GM12878 (cell line): ENCODE measurements at regions of chr2 and their contacts with region 1.

Region 1: DNA sequence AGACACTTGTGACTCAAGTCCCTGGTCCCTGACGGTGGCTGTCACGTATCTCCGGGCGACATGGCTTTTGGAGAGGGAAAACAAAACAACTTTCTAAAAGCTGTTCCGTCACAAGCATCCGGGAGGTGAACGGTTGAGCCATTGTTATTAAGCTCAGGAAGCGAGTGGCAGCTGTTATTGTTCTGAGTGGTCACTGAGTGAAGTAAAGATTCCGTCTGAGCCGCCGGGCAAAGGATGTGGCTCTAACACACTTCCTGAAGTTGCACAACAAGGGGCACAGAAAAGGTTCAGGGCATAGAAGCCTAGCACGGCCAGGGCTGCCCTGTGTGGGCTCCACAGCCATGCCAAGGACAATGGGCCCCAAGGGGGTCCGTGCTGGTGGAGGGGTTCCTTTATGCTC is 24.3 kb downstream of the INPP5D start:
- DNase-seq: peak; percentile 78
- ATAC-seq: peak; percentile 28
- H3K4me3 ChIP-seq: peak overlapping the region; percentile 47
- H3K27ac ChIP-seq: peak overlapping the region; percentile 100
- H3K4me1 ChIP-seq: peaks cover 91% of the 10 kb centered on the region
- H3K27me3 ChIP-seq: no peaks in the 10 kb centered on the region
- CTCF ChIP-seq: no peak
- EP300 ChIP-seq: peak; percentile 57 to 62; a peak in 2 of 4 replicates
- POLR2A ChIP-seq: peak; percentile 51; the same call in 1 of the 2 replicates
- RAD21 ChIP-seq: no peak

Region 2: GRCh38 chr2:233100192-233100998 is 15.9 kb after region 1 on chr2:
- CTCF ChIA-PET with region 1: interaction called, 19 read pairs
- POLR2A ChIA-PET with region 1: interaction called, 59 read pairs
- RAD21 ChIA-PET with region 1: interaction called, 163 read pairs
- SMC1A ChIA-PET with region 1: interaction called, 328 read pairs
- in situ Hi-C with region 1: no loop called
- intact Hi-C with region 1: loop called (anchors 1 kb)
- DNase-seq: peak; percentile 95
- ATAC-seq: peak; percentile 90
- H3K4me3 ChIP-seq: peak overlapping the region; percentile 35; the same call in 1 of the 2 replicates
- H3K27ac ChIP-seq: peak overlapping the region; percentile 99
- H3K4me1 ChIP-seq: peaks cover 49% of the 10 kb centered on the region
- H3K27me3 ChIP-seq: no peaks in the 10 kb centered on the region
- CTCF ChIP-seq: no peak
- EP300 ChIP-seq: peak; percentile 78 to 92; a peak in 3 of 4 replicates
- POLR2A ChIP-seq: no peak; the same call in 1 of the 2 replicates
- RAD21 ChIP-seq: peak; percentile 3; the same call in 1 of the 2 replicates

Region 3: GRCh38 chr2:233124421-233125080 is 40.1 kb after region 1 on chr2:
- CTCF ChIA-PET with region 1: no interaction called
- POLR2A ChIA-PET with region 1: interaction called, 6 read pairs
- RAD21 ChIA-PET with region 1: interaction called, 17 read pairs
- SMC1A ChIA-PET with region 1: interaction called, 6 read pairs
- in situ Hi-C with region 1: no loop called
- intact Hi-C with region 1: no loop called
- DNase-seq: peak; percentile 46
- ATAC-seq: peak; percentile 94
- H3K4me3 ChIP-seq: peak overlapping the region; percentile 15; the same call in 1 of the 2 replicates
- H3K27ac ChIP-seq: peak overlapping the region; percentile 93
- H3K4me1 ChIP-seq: peaks cover 27% of the 10 kb centered on the region
- H3K27me3 ChIP-seq: no peaks in the 10 kb centered on the region
- CTCF ChIP-seq: no peak
- EP300 ChIP-seq: 0 out of 4 replicates have a peak, but pooled peaks of 1 of the 2 experiments have one; percentile 51
- POLR2A ChIP-seq: peak; percentile 60; the same call in 1 of the 2 replicates
- RAD21 ChIP-seq: no peak

Region 4: DNA sequence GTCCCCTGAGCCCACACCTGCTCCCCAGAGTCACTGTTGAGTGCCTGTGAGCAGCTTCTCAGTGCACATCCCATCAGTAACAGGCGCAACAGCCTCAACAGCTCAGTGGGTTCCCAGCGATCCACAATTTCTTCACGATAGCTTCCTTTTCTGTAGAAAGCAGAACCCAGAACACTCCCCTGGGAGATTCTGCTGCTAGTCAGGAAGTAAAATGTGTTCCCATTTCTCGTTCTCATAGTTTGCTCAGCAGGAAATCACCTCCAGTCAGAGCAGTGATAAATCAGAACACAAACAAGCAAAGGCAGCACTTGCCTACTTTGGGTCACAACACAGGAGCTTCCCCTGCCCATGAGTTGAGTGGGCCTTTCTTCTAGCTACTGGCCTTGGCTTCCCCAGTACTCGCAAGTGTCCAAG is 118.0 kb after region 1 on chr2:
- CTCF ChIA-PET with region 1: no interaction called
- POLR2A ChIA-PET with region 1: no interaction called
- RAD21 ChIA-PET with region 1: interaction called, 4 read pairs
- SMC1A ChIA-PET with region 1: no interaction called
- in situ Hi-C with region 1: no loop called
- intact Hi-C with region 1: loop called (anchors 5 kb)
- DNase-seq: peak; percentile 64
- ATAC-seq: peak; percentile 45
- H3K4me3 ChIP-seq: no peak overlapping the region
- H3K27ac ChIP-seq: peak overlapping the region; percentile 78
- H3K4me1 ChIP-seq: peaks cover 28% of the 10 kb centered on the region
- H3K27me3 ChIP-seq: no peaks in the 10 kb centered on the region
- CTCF ChIP-seq: no peak
- EP300 ChIP-seq: no peak
- POLR2A ChIP-seq: no peak; the same call in 1 of the 2 replicates
- RAD21 ChIP-seq: no peak

Region 5: GRCh38 chr2:233251306-233252116 is 167.0 kb after region 1 on chr2 and contains the start of gene ATG16L1:
- CTCF ChIA-PET with region 1: interaction called, 3 read pairs
- POLR2A ChIA-PET with region 1: no interaction called
- RAD21 ChIA-PET with region 1: interaction called, 6 read pairs
- SMC1A ChIA-PET with region 1: interaction called, 5 read pairs
- in situ Hi-C with region 1: no loop called
- intact Hi-C with region 1: loop called (anchors 5 kb)
- DNase-seq: peak; percentile 73
- ATAC-seq: peak; percentile 96
- H3K4me3 ChIP-seq: peak within 1 kb of the TSS; percentile 99
- H3K27ac ChIP-seq: peak within 1 kb of the TSS; percentile 95
- H3K4me1 ChIP-seq: peaks cover 4% of the 10 kb centered on the region; the same call in 1 of the 2 replicates
- H3K27me3 ChIP-seq: no peaks in the 10 kb centered on the region
- CTCF ChIP-seq: peak; percentile 93 to 99 (median 98); a peak in 5 of 6 replicates
- EP300 ChIP-seq: no peak
- POLR2A ChIP-seq: peak; percentile 97
- RAD21 ChIP-seq: peak; percentile 98
- polyA plus RNA-seq, gene ATG16L1: 5.2 to 7.8 TPM